CD4-positive, alpha-beta T cell (primary cell): ENCODE measurements at regions of chr16 and their contacts with region 1.

Region 1: DNA sequence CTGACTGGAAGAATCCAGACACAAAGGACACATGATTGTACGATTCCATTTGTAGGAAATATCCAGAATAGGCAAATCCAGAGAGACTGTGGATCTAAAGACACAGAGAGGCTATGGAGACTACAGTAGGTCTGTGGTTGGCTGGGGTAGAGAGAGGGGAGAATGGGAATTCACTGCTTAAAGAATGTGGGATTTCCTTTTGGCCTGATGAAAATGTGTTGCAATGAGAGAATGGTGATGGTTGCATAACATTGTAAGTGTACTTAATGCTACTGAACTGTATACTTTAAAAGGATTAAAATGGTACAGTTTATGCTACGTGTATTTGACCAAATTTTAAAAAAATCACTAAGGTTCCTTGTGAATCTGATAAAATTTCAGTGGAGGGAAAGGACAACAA is 62.1 kb downstream of the GPRC5B start:
- DNase-seq: no peak
- ATAC-seq: no peak
- H3K4me3 ChIP-seq: no peak overlapping the region
- H3K4me3 Mint-ChIP-seq: no peak overlapping the region
- H3K27ac ChIP-seq: no peak overlapping the region
- H3K27ac Mint-ChIP-seq: no peak overlapping the region
- H3K4me1 ChIP-seq: no peaks in the 10 kb centered on the region
- H3K4me1 Mint-ChIP-seq: no peaks in the 10 kb centered on the region
- H3K27me3 ChIP-seq: no peaks in the 10 kb centered on the region
- H3K27me3 Mint-ChIP-seq: no peaks in the 10 kb centered on the region
- CTCF ChIP-seq: no peak

Region 2: DNA sequence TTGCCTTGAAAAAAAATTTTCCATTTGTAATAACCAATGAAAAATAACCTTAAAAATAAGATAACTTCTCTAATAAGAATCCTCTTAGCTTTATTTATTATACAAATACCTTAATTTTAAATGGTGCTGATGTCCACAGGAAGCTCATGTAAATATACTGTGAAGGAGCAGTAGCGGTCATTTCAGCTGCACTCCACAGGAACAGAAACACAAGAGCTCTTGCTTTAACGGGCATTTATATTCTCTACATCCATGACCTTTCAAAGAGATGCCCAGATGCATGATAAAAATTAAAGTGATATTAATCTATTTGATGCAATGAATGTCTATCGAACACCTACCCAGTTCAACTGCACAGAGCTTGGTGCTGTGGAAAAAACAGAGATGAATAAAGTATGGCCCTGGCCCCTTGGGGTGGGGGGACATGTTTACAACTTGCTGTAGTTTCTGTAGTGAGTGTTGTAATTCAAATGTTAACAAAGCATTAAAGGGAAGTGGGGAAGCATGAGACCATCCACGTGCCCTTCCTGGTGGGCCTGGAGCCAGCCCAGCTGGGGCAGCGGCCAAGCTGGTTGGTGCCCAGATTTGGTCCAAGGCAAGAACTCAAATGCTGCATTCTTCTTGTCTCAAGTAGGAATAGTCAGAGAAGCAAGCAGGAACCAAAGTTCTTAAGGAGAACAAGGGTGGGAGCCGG is 56.5 kb before region 1 on chr16:
- CTCF ChIA-PET with region 1: no interaction called
- POLR2A ChIA-PET with region 1: no interaction called
- intact Hi-C with region 1: loop called in 1 of 2 experiments (anchors 5 kb)
- DNase-seq: no peak
- ATAC-seq: no peak
- H3K4me3 ChIP-seq: no peak overlapping the region
- H3K4me3 Mint-ChIP-seq: no peak overlapping the region
- H3K27ac ChIP-seq: no peak overlapping the region
- H3K27ac Mint-ChIP-seq: no peak overlapping the region
- H3K4me1 ChIP-seq: no peaks in the 10 kb centered on the region
- H3K4me1 Mint-ChIP-seq: no peaks in the 10 kb centered on the region
- H3K27me3 ChIP-seq: no peaks in the 10 kb centered on the region
- H3K27me3 Mint-ChIP-seq: no peaks in the 10 kb centered on the region
- CTCF ChIP-seq: no peak

Region 3: DNA sequence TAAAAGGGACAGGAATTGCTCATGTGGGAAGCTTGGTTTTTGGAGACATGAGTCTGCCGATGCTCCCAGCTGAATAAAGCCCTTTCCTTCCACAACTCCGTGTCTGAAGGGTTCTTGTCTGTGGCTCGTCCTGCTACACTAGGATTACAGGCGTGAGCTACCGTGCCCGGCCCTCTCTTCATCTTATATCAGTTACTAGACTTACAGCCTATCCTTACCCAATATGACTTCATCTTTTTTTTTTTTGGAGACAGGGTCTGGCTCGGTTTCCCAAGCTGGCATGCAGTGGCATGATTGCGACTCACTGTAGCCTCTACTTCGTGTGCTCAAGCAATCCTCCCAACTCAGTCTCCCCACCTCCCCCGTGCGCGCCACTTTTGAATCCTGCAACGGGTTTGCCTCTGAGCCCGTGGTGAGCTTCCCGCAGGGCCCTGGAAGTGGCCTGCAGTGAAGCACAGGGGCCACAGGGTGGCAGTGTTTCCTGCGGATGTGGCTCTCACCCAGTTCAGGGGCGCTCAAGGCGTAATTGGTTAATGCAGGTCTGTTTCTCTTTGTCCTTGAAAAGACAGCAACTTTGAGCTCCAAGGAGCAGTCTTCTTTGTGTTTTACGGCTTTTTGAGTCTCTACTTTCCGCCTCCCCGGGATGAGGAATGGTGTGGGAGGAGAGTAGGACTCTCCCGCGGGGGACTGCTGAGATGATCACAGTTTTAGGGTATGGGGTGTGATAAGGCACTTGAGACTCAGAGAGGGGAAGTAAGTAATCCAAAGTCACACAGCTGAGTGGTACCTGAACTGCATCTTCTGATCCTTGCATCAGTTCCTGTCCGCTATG is 84.8 kb after region 1 on chr16:
- CTCF ChIA-PET with region 1: no interaction called
- POLR2A ChIA-PET with region 1: no interaction called
- intact Hi-C with region 1: no loop called
- DNase-seq: peak; percentile 54 to 83 (median 63)
- ATAC-seq: peak; percentile 100
- H3K4me3 ChIP-seq: peak overlapping the region; percentile 24
- H3K4me3 Mint-ChIP-seq: peak overlapping the region; percentile 66
- H3K27ac ChIP-seq: no peak overlapping the region
- H3K27ac Mint-ChIP-seq: no peak overlapping the region
- H3K4me1 ChIP-seq: peaks cover 10% of the 10 kb centered on the region
- H3K4me1 Mint-ChIP-seq: peaks cover 10% of the 10 kb centered on the region
- H3K27me3 ChIP-seq: peaks cover 0 to 3% of the 10 kb centered on the region in 2 experiments
- H3K27me3 Mint-ChIP-seq: peaks cover 19% of the 10 kb centered on the region
- CTCF ChIP-seq: peak; percentile 97